B cell (primary cell): ENCODE measurements at regions of chr7 and their contacts with region 1.

Region 1: GRCh38 chr7:76314042-76314721 is 11.7 kb downstream of the HSPB1 start:
- DNase-seq: peak; percentile 92
- ATAC-seq: peak; percentile 54
- H3K4me3 ChIP-seq: no peak overlapping the region
- H3K4me3 Mint-ChIP-seq: no peak overlapping the region
- H3K27ac ChIP-seq: no peak overlapping the region
- H3K27ac Mint-ChIP-seq: peak overlapping the region; percentile 15
- H3K4me1 ChIP-seq: peaks cover 5 to 20% of the 10 kb centered on the region in 2 donors
- H3K4me1 Mint-ChIP-seq: peaks cover 20% of the 10 kb centered on the region
- H3K27me3 ChIP-seq: no peaks in the 10 kb centered on the region
- H3K27me3 Mint-ChIP-seq: no peaks in the 10 kb centered on the region
- CTCF ChIP-seq: peak; percentile 97

Region 2: DNA sequence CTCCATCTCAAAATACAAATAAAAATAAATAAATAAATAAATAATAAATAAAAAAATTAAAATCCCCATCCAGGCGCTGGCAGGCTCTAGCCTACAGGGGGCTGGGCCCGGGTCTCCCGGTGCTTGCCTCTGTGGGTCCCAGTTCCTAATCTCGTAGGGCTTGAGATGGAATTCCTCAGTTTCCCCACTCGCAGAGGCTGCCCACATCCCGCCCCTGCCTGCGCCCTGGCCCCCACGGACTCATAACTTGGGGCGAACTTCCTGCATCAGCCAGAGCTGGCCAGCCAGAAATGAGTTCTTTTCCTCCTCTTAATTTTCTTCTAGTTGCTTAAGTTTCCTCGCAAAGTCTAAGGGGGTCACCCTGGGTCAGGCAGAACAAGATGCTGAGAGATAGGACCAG is 134.5 kb before region 1 on chr7:
- CTCF ChIA-PET with region 1: interaction called, 50 read pairs
- POLR2A ChIA-PET with region 1: no interaction called
- intact Hi-C with region 1: no loop called
- DNase-seq: no peak
- ATAC-seq: no peak
- H3K4me3 ChIP-seq: no peak overlapping the region
- H3K4me3 Mint-ChIP-seq: no peak overlapping the region
- H3K27ac ChIP-seq: no peak overlapping the region
- H3K27ac Mint-ChIP-seq: no peak overlapping the region
- H3K4me1 ChIP-seq: peaks cover 0 to 6% of the 10 kb centered on the region in 2 donors
- H3K4me1 Mint-ChIP-seq: peaks cover 3% of the 10 kb centered on the region
- H3K27me3 ChIP-seq: no peaks in the 10 kb centered on the region
- H3K27me3 Mint-ChIP-seq: peaks cover 4% of the 10 kb centered on the region
- CTCF ChIP-seq: no peak

Region 3: GRCh38 chr7:76244781-76245391 is 69.3 kb before region 1 on chr7:
- CTCF ChIA-PET with region 1: no interaction called
- POLR2A ChIA-PET with region 1: no interaction called
- intact Hi-C with region 1: no loop called
- DNase-seq: no peak
- ATAC-seq: no peak
- H3K4me3 ChIP-seq: no peak overlapping the region
- H3K4me3 Mint-ChIP-seq: no peak overlapping the region
- H3K27ac ChIP-seq: no peak overlapping the region
- H3K27ac Mint-ChIP-seq: no peak overlapping the region
- H3K4me1 ChIP-seq: no peaks in the 10 kb centered on the region
- H3K4me1 Mint-ChIP-seq: no peaks in the 10 kb centered on the region
- H3K27me3 ChIP-seq: peaks cover 0 to 9% (median 0%) of the 10 kb centered on the region in 4 experiments
- H3K27me3 Mint-ChIP-seq: peaks cover 17% of the 10 kb centered on the region
- CTCF ChIP-seq: no peak

Region 4: DNA sequence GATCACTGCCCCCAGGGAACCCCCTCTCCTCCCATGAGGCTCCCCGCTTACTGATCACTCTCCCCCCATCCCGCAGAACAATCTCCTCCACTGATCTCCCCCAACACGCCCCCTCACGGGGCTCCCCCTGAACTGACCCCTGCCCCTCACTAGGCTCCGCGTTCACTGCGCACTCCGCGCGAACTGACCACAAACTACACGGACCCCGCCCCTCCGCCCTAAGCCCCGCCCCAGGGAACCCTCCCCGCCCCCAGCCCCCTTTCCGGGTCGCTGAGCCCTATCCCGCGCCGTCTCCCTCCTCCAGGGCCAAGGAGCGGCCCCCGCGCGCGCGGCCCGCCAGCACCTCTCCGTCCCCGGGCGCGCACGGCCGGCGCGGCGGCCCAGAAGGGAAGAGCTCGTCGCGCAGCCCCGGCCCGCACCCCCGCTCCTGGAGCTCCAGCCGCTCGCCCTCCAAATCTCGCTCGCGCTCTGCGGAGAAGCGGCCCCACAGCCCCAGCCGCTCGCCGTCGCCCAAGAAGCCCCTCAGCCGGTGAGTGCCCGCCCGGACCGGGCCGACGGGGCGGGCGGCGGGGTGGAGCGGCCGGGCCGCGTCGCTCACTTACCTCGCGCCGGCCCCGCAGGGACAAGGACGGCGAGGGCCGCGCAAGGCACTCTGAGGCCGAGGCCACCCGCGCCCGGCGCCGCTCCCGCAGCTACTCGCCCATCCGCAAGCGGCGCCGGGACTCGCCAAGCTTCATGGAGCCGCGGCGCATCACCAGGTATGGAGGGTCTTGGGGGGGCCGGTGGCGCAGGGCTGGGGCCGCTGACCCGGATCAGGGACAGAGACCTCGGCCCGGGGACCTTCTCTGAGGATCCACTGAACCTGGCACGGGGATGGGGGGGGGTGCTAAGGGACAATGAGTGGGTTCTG is 31.6 kb before region 1 on chr7:
- CTCF ChIA-PET with region 1: interaction called, 12 read pairs
- POLR2A ChIA-PET with region 1: no interaction called
- intact Hi-C with region 1: no loop called
- DNase-seq: peak; percentile 40
- ATAC-seq: peak; percentile 34
- H3K4me3 ChIP-seq: peak overlapping the region in 3 of 5 experiments; percentile 34 to 54 (median 37)
- H3K4me3 Mint-ChIP-seq: peak overlapping the region; percentile 78
- H3K27ac ChIP-seq: no peak overlapping the region
- H3K27ac Mint-ChIP-seq: no peak overlapping the region
- H3K4me1 ChIP-seq: peaks cover 12 to 19% of the 10 kb centered on the region in 2 donors
- H3K4me1 Mint-ChIP-seq: peaks cover 15% of the 10 kb centered on the region
- H3K27me3 ChIP-seq: peaks cover 0 to 54% (median 18%) of the 10 kb centered on the region in 4 experiments
- H3K27me3 Mint-ChIP-seq: peaks cover 41% of the 10 kb centered on the region
- CTCF ChIP-seq: no peak

Region 5: DNA sequence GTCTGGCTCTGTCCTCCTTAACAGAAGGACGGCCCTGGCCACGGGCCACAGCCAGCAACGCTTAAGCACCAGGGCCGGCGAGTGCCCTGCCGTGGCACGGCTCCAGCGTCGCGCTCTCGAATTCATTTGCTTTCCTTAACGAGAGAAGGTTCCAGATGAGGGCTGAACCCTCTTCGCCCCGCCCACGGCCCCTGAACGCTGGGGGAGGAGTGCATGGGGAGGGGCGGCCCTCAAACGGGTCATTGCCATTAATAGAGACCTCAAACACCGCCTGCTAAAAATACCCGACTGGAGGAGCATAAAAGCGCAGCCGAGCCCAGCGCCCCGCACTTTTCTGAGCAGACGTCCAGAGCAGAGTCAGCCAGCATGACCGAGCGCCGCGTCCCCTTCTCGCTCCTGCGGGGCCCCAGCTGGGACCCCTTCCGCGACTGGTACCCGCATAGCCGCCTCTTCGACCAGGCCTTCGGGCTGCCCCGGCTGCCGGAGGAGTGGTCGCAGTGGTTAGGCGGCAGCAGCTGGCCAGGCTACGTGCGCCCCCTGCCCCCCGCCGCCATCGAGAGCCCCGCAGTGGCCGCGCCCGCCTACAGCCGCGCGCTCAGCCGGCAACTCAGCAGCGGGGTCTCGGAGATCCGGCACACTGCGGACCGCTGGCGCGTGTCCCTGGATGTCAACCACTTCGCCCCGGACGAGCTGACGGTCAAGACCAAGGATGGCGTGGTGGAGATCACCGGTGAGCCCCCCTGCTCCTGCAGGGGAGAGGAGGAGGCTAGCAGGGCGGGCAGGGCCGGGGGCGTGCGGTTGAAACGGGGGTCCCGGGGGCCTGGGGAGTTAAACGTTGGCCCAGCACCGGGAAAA is 11.6 kb before region 1 on chr7 and contains the start of gene HSPB1:
- CTCF ChIA-PET with region 1: interaction called, 119 read pairs
- POLR2A ChIA-PET with region 1: interaction called, 6 read pairs
- intact Hi-C with region 1: loop called (anchors 1 kb)
- DNase-seq: peak; percentile 81
- ATAC-seq: peak; percentile 75
- H3K4me3 ChIP-seq: peak within 1 kb of the TSS; percentile 38 to 73 (median 66)
- H3K4me3 Mint-ChIP-seq: peak within 1 kb of the TSS; percentile 94
- H3K27ac ChIP-seq: peak within 1 kb of the TSS; percentile 52 to 65
- H3K27ac Mint-ChIP-seq: peak within 1 kb of the TSS; percentile 93
- H3K4me1 ChIP-seq: peaks cover 10 to 21% of the 10 kb centered on the region in 2 donors
- H3K4me1 Mint-ChIP-seq: peaks cover 15% of the 10 kb centered on the region
- H3K27me3 ChIP-seq: no peaks in the 10 kb centered on the region
- H3K27me3 Mint-ChIP-seq: no peaks in the 10 kb centered on the region
- CTCF ChIP-seq: no peak
- total RNA-seq, gene HSPB1: 26.8 and 34.0 TPM in 2 replicates

Region 6: DNA sequence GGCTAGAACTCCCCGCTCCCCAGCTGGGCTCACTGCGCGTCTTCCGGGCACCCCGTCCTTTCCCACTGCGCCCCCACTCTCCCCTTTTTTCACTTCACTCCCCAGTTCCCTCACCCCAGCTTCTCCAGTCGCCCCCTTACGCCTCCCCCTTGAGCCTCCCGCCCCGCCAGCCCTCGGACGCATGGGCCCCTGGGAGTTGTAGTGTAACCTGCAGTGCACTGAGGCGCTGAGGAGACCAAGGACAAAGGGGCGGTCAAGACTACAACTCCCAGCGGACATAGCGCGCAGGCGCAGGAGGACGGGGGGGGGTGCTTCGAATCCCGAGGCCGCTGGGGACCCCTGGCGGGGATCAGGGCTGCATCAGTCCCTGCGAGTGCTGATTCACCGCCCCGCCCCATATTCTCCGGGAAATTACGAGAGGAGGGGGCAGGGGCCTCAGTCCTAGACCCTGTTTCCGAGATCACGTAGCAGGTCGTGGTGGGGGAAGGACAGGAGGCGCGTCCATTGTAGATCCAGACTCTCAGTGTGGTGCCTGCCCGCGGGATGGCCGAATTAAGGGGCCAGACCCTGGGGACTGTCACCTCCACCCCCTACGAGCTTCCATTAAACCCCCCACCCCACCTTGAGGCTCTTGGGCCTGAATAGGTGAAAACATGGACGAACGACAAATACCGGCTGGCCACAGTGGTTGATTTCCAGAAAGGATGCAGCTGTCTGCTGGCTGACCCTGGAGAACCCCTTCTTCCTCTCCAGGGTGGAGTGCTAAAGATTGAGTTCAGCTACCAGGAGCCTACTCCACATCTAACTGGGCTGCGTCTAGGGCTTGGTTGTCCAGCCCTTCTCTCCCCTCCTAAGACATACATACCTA is 45.2 kb after region 1 on chr7:
- CTCF ChIA-PET with region 1: interaction called, 25 read pairs
- POLR2A ChIA-PET with region 1: interaction called, 13 read pairs
- intact Hi-C with region 1: loop called (anchors 1 kb)
- DNase-seq: peak; percentile 98
- ATAC-seq: peak; percentile 89
- H3K4me3 ChIP-seq: peak overlapping the region; percentile 34 to 99 (median 95)
- H3K4me3 Mint-ChIP-seq: peak overlapping the region; percentile 93
- H3K27ac ChIP-seq: peak overlapping the region; percentile 90 to 94
- H3K27ac Mint-ChIP-seq: peak overlapping the region; percentile 99
- H3K4me1 ChIP-seq: peaks cover 17 to 19% of the 10 kb centered on the region in 2 donors
- H3K4me1 Mint-ChIP-seq: peaks cover 39% of the 10 kb centered on the region
- H3K27me3 ChIP-seq: no peaks in the 10 kb centered on the region
- H3K27me3 Mint-ChIP-seq: no peaks in the 10 kb centered on the region
- CTCF ChIP-seq: peak; percentile 74